Heart left ventricle (tissue), 16 donors: ENCODE measurements at regions of chr1 and their contacts with region 1.

Region 1: GRCh38 chr1:25503551-25504426 is 39.6 kb upstream of the LDLRAP1 start:
- DNase-seq: peak in 4 of 5 donors; percentile 24 to 65 (median 54)
- ATAC-seq: peak; percentile 62 to 87 (median 85)
- H3K4me3 ChIP-seq: no peak overlapping the region
- H3K27ac ChIP-seq: no peak overlapping the region
- H3K4me1 ChIP-seq: peaks cover 0 to 42% (median 10%) of the 10 kb centered on the region in 12 donors
- H3K27me3 ChIP-seq: no peaks in the 10 kb centered on the region
- CTCF ChIP-seq: peak; percentile 40 to 69 (median 52)
- POLR2A ChIP-seq: no peak

Region 2: GRCh38 chr1:25520446-25521061 is 16.8 kb after region 1 on chr1:
- intact Hi-C with region 1: loop called in 1 of 10 experiments (anchors 1 kb)
- DNase-seq: peak in 3 of 5 donors; percentile 51 to 68 (median 56)
- ATAC-seq: peak in 2 of 4 donors; percentile 36 to 55
- H3K4me3 ChIP-seq: no peak overlapping the region
- H3K27ac ChIP-seq: no peak overlapping the region
- H3K4me1 ChIP-seq: peaks cover 0 to 6% (median 0%) of the 10 kb centered on the region in 12 donors
- H3K27me3 ChIP-seq: no peaks in the 10 kb centered on the region
- CTCF ChIP-seq: peak; percentile 73 to 88 (median 84)
- POLR2A ChIP-seq: no peak

Region 3: GRCh38 chr1:25538191-25538761 is 34.5 kb after region 1 on chr1:
- intact Hi-C with region 1: loop called in 1 of 10 experiments (anchors 5 kb)
- DNase-seq: no peak
- ATAC-seq: no peak
- H3K4me3 ChIP-seq: no peak overlapping the region
- H3K27ac ChIP-seq: no peak overlapping the region
- H3K4me1 ChIP-seq: peaks cover 0 to 5% (median 0%) of the 10 kb centered on the region in 12 donors
- H3K27me3 ChIP-seq: no peaks in the 10 kb centered on the region
- CTCF ChIP-seq: no peak
- POLR2A ChIP-seq: no peak

Region 4: DNA sequence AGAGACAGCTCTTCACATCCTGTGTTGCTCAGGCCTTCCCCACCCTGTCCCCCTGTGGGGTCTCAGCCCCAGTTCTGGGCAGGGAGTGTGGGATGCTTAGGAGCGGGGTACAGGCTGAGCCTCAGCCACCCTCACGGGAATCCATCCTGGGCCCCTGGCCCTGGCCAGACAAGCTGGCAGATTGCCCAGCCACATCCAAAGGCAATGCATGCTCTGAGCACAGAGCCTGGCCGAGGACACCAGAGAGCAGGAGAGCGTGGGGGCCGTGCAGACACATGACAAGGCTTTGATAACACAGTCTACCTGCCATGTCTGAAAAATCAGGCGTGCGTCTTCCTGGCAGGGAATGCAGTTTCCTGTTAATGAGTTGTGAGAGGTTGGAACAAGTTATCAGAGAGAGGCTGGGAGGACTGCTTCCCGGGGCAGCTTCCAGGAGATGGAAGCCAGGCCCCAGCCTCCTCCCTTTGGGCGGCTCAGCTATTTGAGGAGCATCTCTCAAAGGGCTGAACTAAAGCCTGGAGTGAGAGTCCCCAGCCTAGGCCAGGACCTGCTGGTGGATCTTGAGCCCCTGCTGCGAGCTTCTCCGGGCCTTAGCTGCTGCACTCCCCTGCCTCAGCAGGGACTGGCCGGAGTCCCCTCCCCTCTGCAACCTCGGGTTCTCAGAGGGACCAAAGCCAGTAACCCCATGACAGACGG is 224.0 kb after region 1 on chr1:
- intact Hi-C with region 1: no loop called
- DNase-seq: peak; percentile 74 to 91 (median 86)
- ATAC-seq: peak; percentile 81 to 92 (median 89)
- H3K4me3 ChIP-seq: no peak overlapping the region
- H3K27ac ChIP-seq: peak overlapping the region in 11 of 12 donors; percentile 48 to 87 (median 74)
- H3K4me1 ChIP-seq: peaks cover 6 to 50% (median 29%) of the 10 kb centered on the region in 12 donors
- H3K27me3 ChIP-seq: no peaks in the 10 kb centered on the region
- CTCF ChIP-seq: no peak
- POLR2A ChIP-seq: no peak

Region 5: DNA sequence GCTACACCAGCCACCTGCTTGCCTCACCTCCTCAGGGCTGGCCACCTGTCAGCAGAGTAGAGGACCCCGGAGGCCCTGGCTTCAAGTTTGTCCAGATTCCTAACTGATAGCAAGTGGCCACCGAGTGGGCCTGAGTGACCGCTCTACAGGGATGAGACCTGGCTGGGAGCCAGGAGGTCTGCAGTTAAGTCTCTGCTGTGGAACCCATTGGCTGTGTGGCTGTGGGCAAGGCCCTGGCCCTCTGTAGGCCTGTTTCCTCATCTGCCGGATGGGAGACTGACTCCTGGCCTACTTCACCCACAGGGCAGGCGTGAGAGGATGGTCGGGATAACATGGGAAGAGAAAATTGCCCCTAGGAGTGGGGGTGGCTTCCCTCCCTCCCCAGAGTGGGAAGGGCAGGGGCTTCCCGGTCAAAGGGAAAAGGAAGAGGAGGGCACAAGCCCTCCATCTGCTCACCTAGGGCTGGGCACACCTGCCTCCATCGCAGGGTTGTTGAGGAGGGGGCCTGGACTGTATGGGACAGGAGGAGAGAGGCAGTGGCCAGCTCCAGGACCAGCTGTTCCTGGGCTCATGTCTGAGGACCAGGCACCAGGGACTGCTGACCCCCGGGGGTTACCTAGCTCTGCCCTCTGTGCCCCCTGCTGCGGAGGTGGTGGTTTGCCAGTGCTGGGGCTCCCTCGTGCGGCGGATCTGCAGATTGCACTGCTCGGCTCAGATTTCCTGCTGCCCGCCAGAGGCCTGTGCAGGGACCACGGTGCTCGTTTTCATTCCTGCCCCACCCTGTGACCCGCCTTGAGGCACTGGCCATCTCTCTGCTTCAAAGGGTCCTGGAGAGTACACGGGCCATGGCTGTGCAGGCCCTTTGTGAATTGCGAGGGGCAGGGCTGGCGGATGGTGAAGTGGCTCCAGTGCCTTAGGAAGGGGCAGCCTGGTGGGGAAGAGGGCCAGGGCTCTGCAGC is 306.8 kb after region 1 on chr1:
- intact Hi-C with region 1: loop called in 4 of 10 experiments (anchors 5 to 10 kb)
- DNase-seq: peak; percentile 61 to 87 (median 73)
- ATAC-seq: peak; percentile 27 to 63 (median 46)
- H3K4me3 ChIP-seq: no peak overlapping the region
- H3K27ac ChIP-seq: peak overlapping the region in 1 of 12 donors; percentile 6
- H3K4me1 ChIP-seq: peaks cover 0 to 45% (median 32%) of the 10 kb centered on the region in 12 donors
- H3K27me3 ChIP-seq: no peaks in the 10 kb centered on the region
- CTCF ChIP-seq: peak; percentile 84 to 94 (median 89)
- POLR2A ChIP-seq: no peak

Region 6: DNA sequence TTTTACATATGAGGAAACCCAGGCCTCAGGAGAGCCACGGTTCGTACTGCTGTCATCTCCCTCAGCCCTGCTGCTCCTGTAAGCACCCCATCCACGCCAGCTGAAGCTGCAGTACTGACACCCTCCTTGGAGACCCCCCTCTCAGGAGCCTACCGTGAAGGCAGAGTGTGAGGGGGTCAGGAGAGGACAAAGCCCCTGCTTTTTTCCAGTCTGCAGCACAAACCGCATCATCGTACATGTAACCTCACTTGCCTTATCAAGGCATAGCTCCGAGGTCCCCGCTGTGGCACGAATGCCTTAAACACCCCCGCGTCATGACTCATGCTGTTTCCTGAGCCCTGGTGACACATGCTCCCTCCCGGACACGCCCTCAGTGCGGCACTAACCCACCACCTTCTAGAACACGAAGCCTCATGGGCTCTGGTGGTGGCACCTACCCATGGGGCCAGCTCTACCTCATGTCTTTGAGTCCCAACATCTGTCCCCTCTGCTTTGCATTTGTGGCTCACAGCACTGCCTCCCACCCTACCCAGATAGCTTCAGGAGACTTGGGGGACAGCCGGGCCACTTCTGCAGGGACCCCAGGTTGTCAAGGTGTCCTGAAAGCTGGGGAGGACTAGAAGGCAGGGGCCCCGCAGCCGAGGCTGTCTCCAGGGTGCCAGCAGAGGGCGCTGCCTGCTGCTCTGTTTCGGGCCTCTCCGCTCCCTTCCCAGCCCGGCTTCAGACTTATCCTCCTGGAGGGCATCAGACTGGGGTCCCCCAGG is 781.0 kb after region 1 on chr1:
- intact Hi-C with region 1: no loop called
- DNase-seq: peak; percentile 69 to 91 (median 82)
- ATAC-seq: peak; percentile 23 to 49 (median 38)
- H3K4me3 ChIP-seq: peak overlapping the region in 1 of 12 donors; percentile 34
- H3K27ac ChIP-seq: peak overlapping the region in 11 of 12 donors; percentile 36 to 98 (median 53)
- H3K4me1 ChIP-seq: peaks cover 9 to 93% (median 49%) of the 10 kb centered on the region in 12 donors
- H3K27me3 ChIP-seq: no peaks in the 10 kb centered on the region
- CTCF ChIP-seq: peak; percentile 59 to 81 (median 74)
- POLR2A ChIP-seq: no peak